Activated T-helper 1 cell treated with anti-CD3 and anti-CD28 coated beads, Interleukin-12 subunit alpha, Interleukin-12 subunit beta, Interleukin-2, Interleukin-4 antibody, amounts not matched to agents 30 ng/mL and 10 ng/mL and 1 ng/mL, durations not matched to agents 14 hours and 24 hours and 36 hours (primary cell): ENCODE measurements at regions of chr12 and their contacts with region 1.

Region 1: GRCh38 chr12:57899010-57899662 is 42.2 kb upstream of the ATP23 start:
- DNase-seq: peak; percentile 66
- H3K4me3 Mint-ChIP-seq: peak overlapping the region; percentile 75
- H3K27ac Mint-ChIP-seq: peak overlapping the region; percentile 96
- H3K4me1 Mint-ChIP-seq: peaks cover 64% of the 10 kb centered on the region
- H3K27me3 Mint-ChIP-seq: no peaks in the 10 kb centered on the region

Region 2: DNA sequence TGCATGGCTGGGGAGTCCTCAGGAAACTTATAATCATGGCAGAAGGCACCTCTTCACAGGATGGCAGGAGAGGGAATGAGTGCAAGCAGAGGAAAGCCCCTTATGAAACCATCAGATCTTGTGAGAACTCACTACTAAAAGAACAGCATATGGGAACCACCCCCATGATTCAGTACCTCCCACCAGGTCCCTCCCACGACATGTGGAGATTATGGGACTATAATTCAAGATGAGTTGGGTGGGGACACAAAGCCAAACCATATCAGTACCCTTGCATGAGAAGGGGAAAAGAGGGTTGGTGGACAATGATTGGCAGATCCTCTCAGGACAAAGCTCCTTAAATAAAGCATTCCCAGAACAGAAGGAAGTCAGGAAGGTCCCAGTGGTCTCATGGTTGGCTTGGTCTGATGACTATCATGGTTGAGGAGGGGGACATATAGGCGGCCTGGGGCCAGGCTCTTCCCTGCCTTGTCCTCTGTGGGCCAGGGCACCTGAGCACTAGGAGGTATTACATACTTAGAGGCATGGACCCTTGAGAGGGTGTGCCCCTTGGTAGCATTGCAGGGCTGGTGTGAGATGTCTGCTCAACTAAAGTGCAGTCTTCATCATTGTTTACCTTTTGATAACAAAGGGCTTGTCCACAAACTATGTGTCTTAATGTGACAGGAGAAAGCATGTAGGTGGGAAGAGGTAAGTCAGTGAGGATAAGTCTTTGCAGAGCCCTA is 1113.8 kb before region 1 on chr12:
- intact Hi-C with region 1: no loop called
- DNase-seq: no peak
- H3K4me3 Mint-ChIP-seq: no peak overlapping the region
- H3K27ac Mint-ChIP-seq: no peak overlapping the region
- H3K4me1 Mint-ChIP-seq: no peaks in the 10 kb centered on the region
- H3K27me3 Mint-ChIP-seq: no peaks in the 10 kb centered on the region

Region 3: GRCh38 chr12:57771708-57772428 is 127.3 kb before region 1 on chr12 and contains the start of gene METTL1:
- intact Hi-C with region 1: loop called (anchors 1 kb)
- DNase-seq: peak; percentile 90
- H3K4me3 Mint-ChIP-seq: peak within 1 kb of the TSS; percentile 93
- H3K27ac Mint-ChIP-seq: peak within 1 kb of the TSS; percentile 99
- H3K4me1 Mint-ChIP-seq: peaks cover 40% of the 10 kb centered on the region
- H3K27me3 Mint-ChIP-seq: no peaks in the 10 kb centered on the region
- total RNA-seq, gene METTL1: 89.7 and 90.0 TPM in 2 replicates

Region 4: DNA sequence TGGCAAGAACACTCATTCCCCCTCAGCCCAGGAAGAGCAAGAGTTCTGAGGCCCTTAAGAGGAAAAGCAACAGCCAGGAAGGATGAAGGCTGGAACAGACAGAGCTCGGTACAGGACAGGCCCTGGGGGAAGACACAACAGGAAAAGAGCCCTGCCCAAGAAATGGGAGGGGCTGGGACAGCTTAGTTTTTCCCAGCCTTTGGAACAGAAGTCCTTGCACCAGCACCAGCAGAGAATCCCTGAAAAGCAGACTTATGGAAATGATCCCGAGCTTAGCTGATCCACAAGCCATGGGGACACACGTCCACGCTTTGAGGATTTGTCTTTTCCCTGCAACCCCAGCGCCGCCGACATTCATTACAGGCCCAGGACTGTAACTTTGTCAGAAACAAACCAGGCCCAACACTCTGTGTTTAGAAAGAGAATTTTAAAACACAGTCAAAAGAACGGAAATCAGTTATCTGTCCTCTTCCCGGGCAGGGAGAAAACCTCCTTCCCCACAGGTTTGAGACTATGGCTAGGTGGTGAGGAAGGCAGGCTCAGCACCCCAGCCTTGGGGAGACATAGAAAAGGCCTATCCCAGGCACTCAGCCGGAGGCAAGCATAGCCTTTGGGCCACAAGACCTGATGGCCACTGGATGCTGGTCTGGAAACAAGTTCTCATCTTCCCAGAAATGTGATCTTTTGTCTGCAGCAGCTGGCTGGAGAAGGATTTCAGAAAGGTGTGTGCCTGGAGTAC is 76.6 kb before region 1 on chr12:
- intact Hi-C with region 1: no loop called
- DNase-seq: no peak
- H3K4me3 Mint-ChIP-seq: no peak overlapping the region
- H3K27ac Mint-ChIP-seq: peak overlapping the region; percentile 25
- H3K4me1 Mint-ChIP-seq: no peaks in the 10 kb centered on the region
- H3K27me3 Mint-ChIP-seq: no peaks in the 10 kb centered on the region

Region 5: DNA sequence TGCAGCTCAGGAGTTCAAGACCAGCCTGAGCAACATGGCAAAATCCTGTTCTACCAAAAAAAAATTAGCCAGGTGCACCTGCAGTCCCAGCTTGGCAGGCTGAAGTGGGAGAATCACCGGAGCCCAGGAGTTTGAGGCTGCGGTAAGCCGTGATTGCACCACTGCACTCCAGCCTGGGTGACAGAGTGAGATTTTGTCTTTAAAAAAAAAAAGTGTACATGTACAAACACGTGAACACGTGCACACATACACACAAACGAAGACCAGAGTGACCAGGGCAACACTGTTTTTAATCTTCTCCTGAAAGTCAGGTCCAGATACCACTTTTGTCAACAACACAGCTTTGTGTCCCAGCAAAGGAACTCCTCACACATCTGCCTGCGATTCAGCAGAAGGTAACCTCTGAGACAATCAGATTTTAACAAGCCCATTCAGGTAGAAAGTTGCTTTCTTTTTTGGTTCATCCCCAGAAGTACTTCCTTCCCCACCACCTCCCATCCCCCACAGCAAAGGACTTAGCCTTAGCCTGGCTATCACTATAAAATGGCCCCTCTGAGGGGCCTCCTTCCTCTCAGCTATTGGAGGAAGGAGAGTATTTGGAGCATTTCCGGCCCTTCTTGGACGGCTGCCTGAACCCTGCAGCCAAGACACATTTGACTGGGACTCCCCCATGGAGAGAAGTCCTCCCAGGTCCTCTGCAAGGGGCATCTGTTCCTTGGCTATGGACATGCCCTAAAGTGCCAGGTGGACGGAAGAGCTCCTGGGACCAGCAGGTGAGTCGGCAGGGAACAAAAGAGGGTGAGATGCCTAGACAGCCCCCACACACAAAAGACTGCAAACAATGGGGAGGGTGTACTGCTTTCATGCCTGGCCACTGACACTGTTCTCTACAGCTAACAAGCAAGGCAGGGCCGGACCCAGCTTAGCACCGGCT is 62.4 kb before region 1 on chr12:
- intact Hi-C with region 1: loop called (anchors 2 kb)
- DNase-seq: peak; percentile 33
- H3K4me3 Mint-ChIP-seq: peak overlapping the region; percentile 47
- H3K27ac Mint-ChIP-seq: peak overlapping the region; percentile 87
- H3K4me1 Mint-ChIP-seq: peaks cover 84% of the 10 kb centered on the region
- H3K27me3 Mint-ChIP-seq: no peaks in the 10 kb centered on the region

Region 6: GRCh38 chr12:57865090-57865751 is 33.9 kb before region 1 on chr12:
- intact Hi-C with region 1: loop called (anchors 1 kb)
- DNase-seq: peak; percentile 44
- H3K4me3 Mint-ChIP-seq: peak overlapping the region; percentile 86
- H3K27ac Mint-ChIP-seq: peak overlapping the region; percentile 83
- H3K4me1 Mint-ChIP-seq: peaks cover 11% of the 10 kb centered on the region
- H3K27me3 Mint-ChIP-seq: peaks cover 10% of the 10 kb centered on the region

Region 7: DNA sequence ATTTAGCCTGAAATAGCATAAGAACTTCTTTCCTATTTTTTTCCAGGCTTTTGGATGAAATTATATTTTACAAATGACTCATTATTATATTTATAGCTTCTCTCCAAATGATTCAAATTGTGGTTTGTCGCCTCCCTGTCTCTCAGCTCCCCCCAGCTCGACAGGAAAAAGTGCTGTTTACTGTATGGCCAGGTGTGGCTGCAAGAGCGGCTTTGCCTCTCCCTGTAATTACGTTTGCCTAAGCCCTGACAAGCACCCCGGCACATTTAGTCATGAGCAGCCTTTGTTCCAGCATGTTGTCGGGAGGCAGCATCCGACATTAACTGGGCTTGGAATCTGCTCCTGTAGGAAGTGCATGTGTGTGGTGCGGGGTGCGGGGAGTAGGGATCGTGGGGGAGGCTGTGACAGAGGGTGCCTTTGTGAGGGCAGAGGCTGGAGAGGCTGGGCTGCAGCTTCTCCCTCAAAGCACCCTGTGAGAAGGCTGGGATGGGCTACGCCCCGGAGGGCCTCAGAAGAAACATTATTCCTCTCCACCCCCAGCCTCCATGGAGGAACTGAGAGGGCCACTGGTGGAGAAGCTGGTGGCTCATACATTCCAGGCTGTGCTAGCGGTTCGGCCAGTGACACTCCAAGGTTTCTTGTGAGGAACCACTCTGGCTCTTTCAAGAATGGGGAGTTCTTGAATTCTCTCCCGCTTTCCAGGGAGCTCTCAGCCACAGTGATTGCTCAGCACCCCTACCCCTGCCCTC is 10.6 kb before region 1 on chr12:
- intact Hi-C with region 1: loop called (anchors 1 kb)
- DNase-seq: peak; percentile 14
- H3K4me3 Mint-ChIP-seq: no peak overlapping the region
- H3K27ac Mint-ChIP-seq: no peak overlapping the region
- H3K4me1 Mint-ChIP-seq: peaks cover 22% of the 10 kb centered on the region
- H3K27me3 Mint-ChIP-seq: peaks cover 2% of the 10 kb centered on the region

Region 8: GRCh38 chr12:57935839-57936512 is 36.8 kb after region 1 on chr12:
- intact Hi-C with region 1: loop called (anchors 1 kb)
- DNase-seq: peak; percentile 92
- H3K4me3 Mint-ChIP-seq: peak overlapping the region; percentile 94
- H3K27ac Mint-ChIP-seq: peak overlapping the region; percentile 99
- H3K4me1 Mint-ChIP-seq: peaks cover 36% of the 10 kb centered on the region
- H3K27me3 Mint-ChIP-seq: no peaks in the 10 kb centered on the region

Region 9: DNA sequence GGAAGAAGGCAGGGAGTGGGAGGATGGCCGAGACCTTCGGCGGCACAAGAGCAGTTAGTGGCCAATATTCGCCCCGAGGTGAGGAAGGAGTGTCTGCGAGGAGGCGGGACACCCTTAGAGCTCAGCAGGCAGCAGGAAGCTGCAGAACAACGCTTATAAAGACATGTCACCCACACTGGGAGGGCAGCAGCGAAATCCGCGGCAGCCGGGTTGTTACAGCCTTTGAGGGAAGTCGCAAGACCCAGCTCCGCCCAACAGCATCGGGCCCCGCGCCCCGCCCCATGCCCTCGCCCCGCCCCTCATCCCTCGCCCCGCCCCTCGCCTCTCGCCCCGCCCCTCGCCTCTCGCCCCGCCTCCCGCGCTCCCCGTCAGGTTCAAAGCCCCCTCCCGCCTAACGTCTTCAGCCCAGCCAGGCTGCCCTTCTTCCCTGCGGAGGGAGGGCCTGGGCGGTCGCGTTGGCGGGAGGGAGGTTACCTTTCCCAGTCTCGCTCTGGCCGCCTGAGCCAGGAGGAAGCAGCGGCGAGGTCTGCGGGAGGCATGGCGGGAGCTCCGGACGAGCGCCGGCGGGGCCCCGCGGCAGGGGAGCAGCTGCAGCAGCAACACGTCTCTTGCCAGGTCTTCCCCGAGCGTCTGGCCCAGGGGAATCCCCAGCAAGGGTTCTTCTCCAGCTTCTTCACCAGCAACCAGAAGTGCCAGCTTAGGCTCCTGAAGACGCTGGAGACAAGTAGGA is 42.2 kb after region 1 on chr12 and contains the start of gene ATP23:
- intact Hi-C with region 1: loop called (anchors 1 kb)
- DNase-seq: peak; percentile 86
- H3K4me3 Mint-ChIP-seq: peak within 1 kb of the TSS; percentile 89
- H3K27ac Mint-ChIP-seq: peak within 1 kb of the TSS; percentile 95
- H3K4me1 Mint-ChIP-seq: peaks cover 46% of the 10 kb centered on the region
- H3K27me3 Mint-ChIP-seq: no peaks in the 10 kb centered on the region
- total RNA-seq, gene ATP23: 7.3 and 8.7 TPM in 2 replicates